ENCODE measurements at regions of chr1 and their contacts with region 1.

Region 1: GRCh38 chr1:220873868-220874655 is 5.2 kb upstream of the HLX start:
- DNase-seq: peak; percentile 21 to 79
- ATAC-seq: peak in 7 of 8 donors; percentile 3 to 43 (median 38)
- H3K4me3 ChIP-seq: no peak overlapping the region
- H3K27ac ChIP-seq: peak overlapping the region in 4 of 10 donors; percentile 20 to 58 (median 38)
- H3K4me1 ChIP-seq: peaks cover 0 to 55% (median 30%) of the 10 kb centered on the region in 9 donors
- H3K27me3 ChIP-seq: peaks cover 0 to 6% (median 0%) of the 10 kb centered on the region in 7 donors
- CTCF ChIP-seq: peak; percentile 55 to 87 (median 77)

Region 2: DNA sequence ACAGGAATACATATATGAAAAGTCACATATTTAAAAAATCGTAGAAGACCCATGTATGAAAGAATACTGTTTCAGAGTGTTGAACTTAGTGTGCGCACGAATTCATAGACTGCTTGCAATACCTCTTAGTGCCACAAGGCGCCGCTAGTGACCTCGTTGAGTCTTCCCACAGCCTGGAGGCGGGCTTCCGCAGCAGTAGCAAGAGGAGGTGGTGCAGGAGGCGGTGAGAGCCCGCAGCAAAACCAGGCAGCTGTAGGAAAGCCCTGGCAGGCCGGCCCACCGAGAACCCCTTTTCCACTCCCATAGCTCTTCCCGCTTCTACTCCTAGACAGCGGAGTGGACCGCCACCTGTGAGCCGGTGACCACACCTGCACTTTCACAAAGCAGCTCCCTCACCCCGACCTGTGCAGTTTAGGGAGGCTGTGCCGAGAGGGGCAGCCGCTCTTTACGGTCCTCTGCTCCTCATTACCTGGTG is 63.8 kb before region 1 on chr1:
- intact Hi-C with region 1: loop called in 5 of 10 experiments (anchors 1 to 5 kb)
- DNase-seq: peak; percentile 79
- ATAC-seq: peak; percentile 79 to 93 (median 87)
- H3K4me3 ChIP-seq: peak overlapping the region in 8 of 10 donors; percentile 18 to 42 (median 34)
- H3K27ac ChIP-seq: peak overlapping the region in 2 of 10 donors; percentile 21 to 33
- H3K4me1 ChIP-seq: peaks cover 4 to 15% (median 12%) of the 10 kb centered on the region in 9 donors
- H3K27me3 ChIP-seq: no peaks in the 10 kb centered on the region
- CTCF ChIP-seq: peak; percentile 83 to 96 (median 95)

Region 3: DNA sequence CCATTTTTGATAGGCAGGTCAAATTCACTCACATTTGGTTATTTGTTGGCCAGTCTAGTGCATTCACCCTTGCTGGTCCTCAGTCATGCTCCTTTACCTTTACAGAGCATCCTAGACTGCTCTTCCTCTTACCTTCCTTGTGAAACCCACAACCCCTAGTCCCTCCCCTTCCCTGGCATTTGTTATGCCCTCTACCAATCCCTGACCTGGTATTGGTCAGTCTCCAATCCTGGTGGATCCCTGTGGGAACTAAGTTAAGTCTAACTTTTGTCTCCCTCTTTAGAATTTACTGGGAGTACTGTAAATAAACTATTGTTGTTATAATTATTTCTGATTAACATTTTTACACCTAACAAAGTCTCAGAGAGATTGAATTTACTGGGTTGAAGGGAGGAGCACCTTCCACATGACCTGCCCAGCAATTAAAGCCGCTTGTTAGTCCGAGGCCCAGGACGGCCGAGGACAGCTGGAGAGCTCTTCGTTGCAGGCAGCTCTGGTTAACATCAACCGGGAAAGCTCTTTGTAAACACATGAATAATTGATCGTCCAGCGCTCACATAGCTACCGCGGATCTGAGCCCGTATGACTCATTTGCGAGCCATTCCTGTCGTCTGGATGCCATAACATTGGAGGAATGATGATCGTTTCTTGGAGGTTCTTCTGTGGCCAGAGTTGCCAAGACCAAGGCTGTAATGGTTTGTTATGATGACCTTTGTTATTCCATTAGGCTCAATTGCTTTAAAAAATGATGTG is 55.5 kb before region 1 on chr1:
- intact Hi-C with region 1: loop called in 4 of 10 experiments (anchors 5 kb)
- DNase-seq: no peak
- ATAC-seq: peak in 1 of 8 donors; percentile 15
- H3K4me3 ChIP-seq: no peak overlapping the region
- H3K27ac ChIP-seq: no peak overlapping the region
- H3K4me1 ChIP-seq: peaks cover 0 to 4% (median 0%) of the 10 kb centered on the region in 9 donors
- H3K27me3 ChIP-seq: no peaks in the 10 kb centered on the region
- CTCF ChIP-seq: no peak

Region 4: GRCh38 chr1:220843481-220844011 is 30.5 kb before region 1 on chr1:
- intact Hi-C with region 1: loop called in 1 of 10 experiments (anchors 2 kb)
- DNase-seq: peak; percentile 36 to 89
- ATAC-seq: peak; percentile 93 to 99 (median 98)
- H3K4me3 ChIP-seq: no peak overlapping the region
- H3K27ac ChIP-seq: peak overlapping the region in 8 of 10 donors; percentile 5 to 85 (median 72)
- H3K4me1 ChIP-seq: peaks cover 0 to 52% (median 21%) of the 10 kb centered on the region in 9 donors
- H3K27me3 ChIP-seq: no peaks in the 10 kb centered on the region
- CTCF ChIP-seq: no peak

Region 5: GRCh38 chr1:221435504-221435904 is 561.4 kb after region 1 on chr1:
- intact Hi-C with region 1: loop called in 9 of 10 experiments (anchors 1 to 10 kb)
- DNase-seq: no peak
- ATAC-seq: peak in 7 of 8 donors; percentile 38 to 83 (median 76)
- H3K4me3 ChIP-seq: no peak overlapping the region
- H3K27ac ChIP-seq: peak overlapping the region in 2 of 10 donors; percentile 23 to 38
- H3K4me1 ChIP-seq: peaks cover 0 to 28% (median 8%) of the 10 kb centered on the region in 9 donors
- H3K27me3 ChIP-seq: no peaks in the 10 kb centered on the region
- CTCF ChIP-seq: peak; percentile 87 to 96 (median 95)

Region 6: DNA sequence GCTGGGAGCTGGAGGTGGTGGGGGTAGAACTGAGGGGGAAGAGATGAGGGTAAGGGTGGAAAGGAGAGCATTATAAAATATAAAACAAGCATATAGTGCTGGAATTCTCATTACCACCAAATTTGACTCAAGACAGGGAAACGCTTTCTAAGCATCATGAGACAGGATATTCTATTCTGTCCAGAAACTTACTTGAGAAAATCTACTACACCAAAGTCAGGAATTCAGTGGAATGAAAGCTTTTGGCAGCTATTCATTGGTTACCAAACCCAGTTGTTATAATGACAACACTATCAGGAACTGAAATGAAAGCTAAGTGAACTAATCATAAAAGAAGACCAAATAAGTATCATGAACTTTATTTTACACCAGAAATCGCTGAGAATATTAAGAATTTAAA is 1823.8 kb after region 1 on chr1:
- intact Hi-C with region 1: no loop called
- DNase-seq: no peak
- ATAC-seq: peak in 2 of 8 donors; percentile 7 to 23
- H3K4me3 ChIP-seq: no peak overlapping the region
- H3K27ac ChIP-seq: no peak overlapping the region
- H3K4me1 ChIP-seq: peaks cover 0 to 9% (median 0%) of the 10 kb centered on the region in 9 donors
- H3K27me3 ChIP-seq: no peaks in the 10 kb centered on the region
- CTCF ChIP-seq: no peak

Measured in heart right ventricle (tissue), 16 donors.